Activated CD8-positive, alpha-beta T cell treated with anti-CD3 and anti-CD28 coated beads for 36 hours (primary cell): ENCODE measurements at regions of chr15 and their contacts with region 1.

Region 1: GRCh38 chr15:44501768-44502366 is 35.1 kb upstream of the EIF3J start:
- DNase-seq: no peak
- ATAC-seq: peak; percentile 62
- H3K4me3 Mint-ChIP-seq: no peak overlapping the region
- H3K27ac Mint-ChIP-seq: peak overlapping the region; percentile 13
- H3K4me1 Mint-ChIP-seq: peaks cover 22% of the 10 kb centered on the region
- H3K27me3 Mint-ChIP-seq: no peaks in the 10 kb centered on the region
- CTCF ChIP-seq: peak; percentile 71

Region 2: DNA sequence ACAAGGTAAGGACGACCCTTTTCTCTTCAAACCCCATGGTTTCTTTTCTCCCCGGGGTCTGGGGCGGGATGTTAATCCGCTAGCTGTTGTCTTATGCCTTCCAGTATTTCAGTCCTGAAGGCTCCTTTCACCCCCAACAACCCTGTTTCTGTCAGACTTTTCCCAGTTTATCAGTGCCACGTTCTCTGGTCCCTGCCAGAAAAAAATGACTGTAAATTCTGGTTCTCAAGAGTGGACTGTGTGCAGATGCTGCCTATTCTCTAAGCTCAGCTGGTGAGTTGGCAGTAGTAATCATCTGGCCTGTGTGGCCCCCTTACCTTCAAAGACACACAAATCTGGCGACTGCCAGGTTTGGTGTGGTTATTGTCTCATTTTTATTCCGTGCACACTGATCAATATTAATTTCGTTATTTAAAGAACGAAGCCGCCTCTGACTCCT is 212.5 kb before region 1 on chr15:
- CTCF ChIA-PET with region 1: interaction called, 11 read pairs
- POLR2A ChIA-PET with region 1: no interaction called
- intact Hi-C with region 1: no loop called
- DNase-seq: peak; percentile 9
- ATAC-seq: no peak
- H3K4me3 Mint-ChIP-seq: peak overlapping the region; percentile 95
- H3K27ac Mint-ChIP-seq: peak overlapping the region; percentile 72
- H3K4me1 Mint-ChIP-seq: peaks cover 39% of the 10 kb centered on the region
- H3K27me3 Mint-ChIP-seq: no peaks in the 10 kb centered on the region
- CTCF ChIP-seq: no peak

Region 3: GRCh38 chr15:44458429-44458828 is 43.4 kb before region 1 on chr15:
- CTCF ChIA-PET with region 1: no interaction called
- POLR2A ChIA-PET with region 1: no interaction called
- intact Hi-C with region 1: no loop called
- DNase-seq: no peak
- ATAC-seq: no peak
- H3K4me3 Mint-ChIP-seq: no peak overlapping the region
- H3K27ac Mint-ChIP-seq: peak overlapping the region; percentile 0
- H3K4me1 Mint-ChIP-seq: peaks cover 35% of the 10 kb centered on the region
- H3K27me3 Mint-ChIP-seq: no peaks in the 10 kb centered on the region
- CTCF ChIP-seq: no peak

Region 4: GRCh38 chr15:44489464-44489863 is 12.4 kb before region 1 on chr15:
- CTCF ChIA-PET with region 1: interaction called, 16 read pairs
- POLR2A ChIA-PET with region 1: interaction called, 5 read pairs
- intact Hi-C with region 1: no loop called
- DNase-seq: no peak
- ATAC-seq: peak; percentile 92
- H3K4me3 Mint-ChIP-seq: no peak overlapping the region
- H3K27ac Mint-ChIP-seq: peak overlapping the region; percentile 47
- H3K4me1 Mint-ChIP-seq: peaks cover 35% of the 10 kb centered on the region
- H3K27me3 Mint-ChIP-seq: no peaks in the 10 kb centered on the region
- CTCF ChIP-seq: no peak